ENCODE measurements at regions of chr6 and their contacts with region 1.

Region 1: DNA sequence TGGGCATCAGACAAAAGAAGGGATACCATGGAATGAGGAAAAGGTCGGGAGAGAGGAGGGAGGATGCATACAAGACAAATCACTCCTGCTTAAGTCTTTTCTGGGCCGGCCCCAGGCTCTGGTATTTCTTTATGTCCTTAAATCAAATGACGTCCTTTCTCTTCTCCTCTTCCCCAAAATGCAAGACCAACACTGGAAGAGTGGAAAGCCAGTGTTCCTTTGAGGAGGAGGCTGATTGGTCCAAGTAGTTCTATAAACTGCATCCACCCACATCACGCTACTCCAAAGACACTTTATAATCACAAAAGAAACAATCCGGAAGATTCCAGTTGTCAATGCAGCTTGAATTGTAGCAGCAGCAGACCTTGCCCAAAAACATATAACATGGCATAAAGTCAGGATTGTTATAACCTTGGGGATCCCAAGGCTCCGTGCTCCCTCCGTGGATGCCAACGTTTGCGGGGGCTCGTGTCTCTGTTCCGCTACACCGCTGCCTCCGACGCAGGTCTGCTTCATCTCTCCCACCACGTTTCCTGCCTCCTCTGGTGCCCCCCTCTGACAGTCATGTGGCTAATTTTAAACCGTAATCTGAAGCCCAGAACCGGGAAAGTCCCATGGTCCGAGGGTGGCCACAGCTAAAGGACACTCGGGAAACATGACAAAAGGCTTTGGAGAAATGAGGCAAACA is 47.1 kb downstream of the MCUR1 start:
- DNase-seq: peak in 1 of 2 donors; percentile 84
- H3K4me3 ChIP-seq: peak overlapping the region; percentile 20 to 54
- H3K27ac ChIP-seq: peak overlapping the region; percentile 15 to 16
- H3K4me1 ChIP-seq: peaks cover 0 to 25% of the 10 kb centered on the region in 2 donors
- H3K27me3 ChIP-seq: no peaks in the 10 kb centered on the region
- CTCF ChIP-seq: peak; percentile 9 to 41 (median 23)

Region 2: DNA sequence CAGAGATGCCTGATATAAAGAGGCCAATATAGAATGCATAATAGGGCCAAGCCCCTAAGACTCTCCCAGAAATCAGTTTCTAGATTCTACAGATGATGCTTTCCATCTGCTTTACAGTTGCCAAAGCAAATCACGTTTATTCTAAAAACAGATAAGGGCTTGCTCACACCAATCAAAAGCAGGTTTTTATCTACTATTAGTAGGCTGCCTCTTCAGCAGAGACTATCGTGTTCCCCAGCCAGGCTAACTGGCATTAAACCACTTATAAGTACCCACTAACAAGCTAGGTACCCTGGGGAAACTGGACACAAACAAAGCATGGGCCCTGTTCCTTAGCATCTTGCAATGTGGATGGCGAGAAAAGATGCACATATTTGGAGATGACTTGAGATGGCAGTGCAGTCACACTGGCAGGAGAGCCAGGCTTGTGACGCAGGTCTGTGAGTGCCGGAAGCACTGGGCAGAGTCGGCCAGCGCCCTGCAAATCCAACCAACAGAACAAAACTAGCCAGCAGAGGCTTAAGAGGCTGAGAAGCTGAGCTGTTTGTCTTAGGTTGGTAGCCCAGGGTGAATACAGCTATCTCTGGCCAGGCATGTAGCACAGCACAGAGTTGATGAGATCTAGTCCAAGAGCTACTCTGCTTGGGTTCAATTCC is 353.2 kb before region 1 on chr6:
- intact Hi-C with region 1: loop called (anchors 10 kb)
- DNase-seq: peak; percentile 25 to 91
- H3K4me3 ChIP-seq: no peak overlapping the region
- H3K27ac ChIP-seq: peak overlapping the region; percentile 88 to 94
- H3K4me1 ChIP-seq: peaks cover 5 to 35% of the 10 kb centered on the region in 2 donors
- H3K27me3 ChIP-seq: no peaks in the 10 kb centered on the region
- CTCF ChIP-seq: no peak

Region 3: DNA sequence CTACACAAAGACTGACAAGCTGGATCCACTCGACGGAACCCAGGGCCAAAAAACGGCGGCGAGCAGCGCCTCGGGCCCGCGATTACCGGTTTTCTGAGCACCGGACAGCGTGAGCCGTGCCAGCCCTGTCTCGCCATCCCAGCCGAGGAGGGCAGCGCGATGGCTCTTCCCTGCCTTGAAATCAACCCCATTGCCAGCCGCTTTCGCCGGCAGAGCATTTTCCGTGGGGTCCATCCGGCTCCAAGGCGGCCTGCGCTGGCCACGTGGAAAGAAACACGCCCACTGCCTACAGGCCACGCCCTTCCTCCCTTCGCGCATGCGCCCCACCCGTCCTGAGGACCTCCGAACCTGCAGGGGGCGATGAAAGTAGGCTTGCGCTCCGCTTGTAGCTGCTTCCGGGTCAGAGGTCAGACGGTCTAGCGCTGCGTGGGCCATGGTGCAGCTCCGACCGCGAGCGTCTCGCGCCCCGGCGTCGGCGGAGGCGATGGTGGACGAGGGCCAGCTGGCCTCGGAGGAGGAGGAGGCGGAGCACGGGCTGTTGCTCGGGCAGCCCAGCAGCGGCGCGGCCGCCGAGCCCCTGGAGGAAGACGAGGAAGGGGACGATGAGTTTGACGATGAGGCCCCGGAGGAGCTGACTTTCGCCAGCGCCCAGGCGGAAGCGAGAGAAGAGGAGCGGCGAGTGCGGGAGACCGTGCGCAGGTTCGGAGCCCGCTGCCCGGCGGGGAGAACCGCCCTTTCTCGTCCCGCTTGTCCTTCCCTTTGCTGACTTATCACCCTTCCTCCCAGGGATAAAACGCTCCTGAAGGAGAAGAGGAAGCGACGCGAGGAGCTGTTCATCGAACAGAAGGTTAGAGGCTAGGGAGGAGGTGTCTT is 152.1 kb before region 1 on chr6 and contains the start of gene NOL7:
- intact Hi-C with region 1: loop called (anchors 2 kb)
- DNase-seq: peak; percentile 84 to 98
- H3K4me3 ChIP-seq: peak within 1 kb of the TSS; percentile 82 to 97
- H3K27ac ChIP-seq: peak within 1 kb of the TSS; percentile 92 to 95
- H3K4me1 ChIP-seq: peaks cover 0 to 17% of the 10 kb centered on the region in 2 donors
- H3K27me3 ChIP-seq: no peaks in the 10 kb centered on the region
- CTCF ChIP-seq: peak; percentile 83 to 96 (median 87)
- total RNA-seq, gene NOL7: 32.2 TPM

Region 4: GRCh38 chr6:13641315-13641714 is 126.0 kb before region 1 on chr6:
- intact Hi-C with region 1: loop called (anchors 5 kb)
- DNase-seq: no peak
- H3K4me3 ChIP-seq: no peak overlapping the region
- H3K27ac ChIP-seq: peak overlapping the region; percentile 73 to 81
- H3K4me1 ChIP-seq: peaks cover 0 to 17% of the 10 kb centered on the region in 2 donors
- H3K27me3 ChIP-seq: no peaks in the 10 kb centered on the region
- CTCF ChIP-seq: no peak